ENCODE measurements at regions of chr7 and their contacts with region 1.

Region 1: DNA sequence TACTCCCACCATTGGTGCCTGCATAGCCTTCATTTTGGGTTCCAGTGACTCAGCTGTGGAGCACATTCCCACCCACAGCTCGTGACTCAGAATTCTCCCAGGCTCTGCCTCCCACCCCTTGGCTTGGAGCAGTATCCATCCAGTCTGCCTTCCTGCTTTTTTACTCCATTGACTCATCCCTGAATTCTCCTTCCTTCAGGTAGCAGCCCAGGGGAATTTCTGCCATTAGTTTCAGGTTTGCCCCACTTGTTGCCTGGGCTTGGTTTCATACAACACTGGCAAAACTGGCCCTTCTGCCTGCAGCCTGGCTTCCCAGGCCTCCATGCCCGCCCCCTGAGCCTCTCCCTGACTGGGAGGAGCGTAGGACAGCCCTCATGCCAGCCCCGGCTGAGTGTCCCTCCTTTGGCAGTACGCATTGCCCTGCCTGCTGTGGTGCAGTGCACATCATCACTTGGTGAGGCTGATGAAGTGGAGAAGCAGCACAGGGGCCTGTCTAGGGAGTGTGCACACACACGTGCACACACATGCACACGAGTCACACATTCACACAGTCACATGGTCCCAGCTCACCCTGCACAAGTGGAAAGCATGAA is 55.0 kb downstream of the SNX10 start:
- DNase-seq: no peak
- ATAC-seq: no peak
- H3K4me3 ChIP-seq: no peak overlapping the region
- H3K27ac ChIP-seq: no peak overlapping the region
- H3K4me1 ChIP-seq: peaks cover 0 to 6% (median 0%) of the 10 kb centered on the region in 9 donors
- H3K27me3 ChIP-seq: peaks cover 0 to 14% (median 0%) of the 10 kb centered on the region in 7 donors
- CTCF ChIP-seq: no peak

Region 2: GRCh38 chr7:25908154-25908949 is 438.4 kb before region 1 on chr7:
- intact Hi-C with region 1: loop called in 1 of 10 experiments (anchors 10 kb)
- DNase-seq: no peak
- ATAC-seq: no peak
- H3K4me3 ChIP-seq: no peak overlapping the region
- H3K27ac ChIP-seq: no peak overlapping the region
- H3K4me1 ChIP-seq: no peaks in the 10 kb centered on the region
- H3K27me3 ChIP-seq: peaks cover 0 to 57% (median 24%) of the 10 kb centered on the region in 7 donors
- CTCF ChIP-seq: no peak